ENCODE measurements at regions of chrX and their contacts with region 1.

Region 1: GRCh38 chrX:18966624-18967023 is 17.3 kb downstream of the PHKA2 start:
- DNase-seq: no peak
- H3K4me3 ChIP-seq: no peak overlapping the region
- H3K27ac ChIP-seq: no peak overlapping the region
- H3K4me1 ChIP-seq: peaks cover 6% of the 10 kb centered on the region
- H3K27me3 ChIP-seq: no peaks in the 10 kb centered on the region
- CTCF ChIP-seq: no peak

Region 2: DNA sequence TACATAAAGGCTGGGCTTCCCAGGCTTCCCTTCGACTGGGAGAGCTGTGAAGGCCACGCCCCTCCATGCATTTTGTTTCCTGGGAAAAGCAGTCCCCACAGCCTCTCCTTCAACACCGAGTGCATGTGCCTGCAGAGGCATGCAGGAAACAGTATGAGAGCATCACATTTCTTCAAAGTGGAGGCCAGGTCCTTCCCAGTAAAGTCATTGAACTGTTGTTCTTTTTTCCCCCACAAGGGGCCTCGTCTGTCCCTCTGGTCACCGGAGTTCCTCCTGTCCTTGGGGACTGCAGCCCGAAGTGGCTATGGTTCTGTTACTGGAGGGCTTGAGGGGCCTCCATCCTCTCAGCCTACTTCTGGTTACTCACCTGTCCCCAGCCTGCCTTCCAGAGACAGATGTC is 1161.5 kb before region 1 on chrX:
- CTCF ChIA-PET with region 1: no interaction called
- POLR2A ChIA-PET with region 1: interaction called, 16 read pairs
- intact Hi-C with region 1: no loop called
- DNase-seq: peak; percentile 9
- H3K4me3 ChIP-seq: no peak overlapping the region
- H3K27ac ChIP-seq: no peak overlapping the region
- H3K4me1 ChIP-seq: no peaks in the 10 kb centered on the region
- H3K27me3 ChIP-seq: no peaks in the 10 kb centered on the region
- CTCF ChIP-seq: peak; percentile 18; the same call in 1 of the 2 replicates

Measured in A673 (cell line).